CD14-positive monocyte (primary cell): ENCODE measurements at regions of chr22 and their contacts with region 1.

Region 1: GRCh38 chr22:17742527-17742902 is 31.8 kb downstream of the BID start:
- DNase-seq: peak; percentile 44 to 65 (median 58)
- H3K4me3 ChIP-seq: no peak overlapping the region
- H3K4me3 Mint-ChIP-seq: no peak overlapping the region
- H3K27ac ChIP-seq: peak overlapping the region in 1 of 2 donors; percentile 68
- H3K27ac Mint-ChIP-seq: peak overlapping the region in 4 of 7 donors; percentile 33 to 61 (median 40)
- H3K4me1 ChIP-seq: no peaks in the 10 kb centered on the region
- H3K4me1 Mint-ChIP-seq: no peaks in the 10 kb centered on the region
- H3K27me3 ChIP-seq: no peaks in the 10 kb centered on the region
- H3K27me3 Mint-ChIP-seq: no peaks in the 10 kb centered on the region
- CTCF ChIP-seq: peak; percentile 88

Region 2: GRCh38 chr22:17785185-17786184 is 43.0 kb after region 1 on chr22:
- intact Hi-C with region 1: loop called (anchors 2 to 5 kb)
- DNase-seq: peak; percentile 60 to 73 (median 70)
- H3K4me3 ChIP-seq: no peak overlapping the region
- H3K4me3 Mint-ChIP-seq: no peak overlapping the region
- H3K27ac ChIP-seq: peak overlapping the region in 1 of 2 donors; percentile 58
- H3K27ac Mint-ChIP-seq: peak overlapping the region in 5 of 7 donors; percentile 42 to 85 (median 43)
- H3K4me1 ChIP-seq: peaks cover 27 to 49% of the 10 kb centered on the region in 2 donors
- H3K4me1 Mint-ChIP-seq: peaks cover 33% of the 10 kb centered on the region
- H3K27me3 ChIP-seq: no peaks in the 10 kb centered on the region
- H3K27me3 Mint-ChIP-seq: peaks cover 0 to 2% (median 0%) of the 10 kb centered on the region in 3 donors
- CTCF ChIP-seq: peak; percentile 81